A673 (cell line): ENCODE measurements at regions of chr1 and their contacts with region 1.

Region 1: DNA sequence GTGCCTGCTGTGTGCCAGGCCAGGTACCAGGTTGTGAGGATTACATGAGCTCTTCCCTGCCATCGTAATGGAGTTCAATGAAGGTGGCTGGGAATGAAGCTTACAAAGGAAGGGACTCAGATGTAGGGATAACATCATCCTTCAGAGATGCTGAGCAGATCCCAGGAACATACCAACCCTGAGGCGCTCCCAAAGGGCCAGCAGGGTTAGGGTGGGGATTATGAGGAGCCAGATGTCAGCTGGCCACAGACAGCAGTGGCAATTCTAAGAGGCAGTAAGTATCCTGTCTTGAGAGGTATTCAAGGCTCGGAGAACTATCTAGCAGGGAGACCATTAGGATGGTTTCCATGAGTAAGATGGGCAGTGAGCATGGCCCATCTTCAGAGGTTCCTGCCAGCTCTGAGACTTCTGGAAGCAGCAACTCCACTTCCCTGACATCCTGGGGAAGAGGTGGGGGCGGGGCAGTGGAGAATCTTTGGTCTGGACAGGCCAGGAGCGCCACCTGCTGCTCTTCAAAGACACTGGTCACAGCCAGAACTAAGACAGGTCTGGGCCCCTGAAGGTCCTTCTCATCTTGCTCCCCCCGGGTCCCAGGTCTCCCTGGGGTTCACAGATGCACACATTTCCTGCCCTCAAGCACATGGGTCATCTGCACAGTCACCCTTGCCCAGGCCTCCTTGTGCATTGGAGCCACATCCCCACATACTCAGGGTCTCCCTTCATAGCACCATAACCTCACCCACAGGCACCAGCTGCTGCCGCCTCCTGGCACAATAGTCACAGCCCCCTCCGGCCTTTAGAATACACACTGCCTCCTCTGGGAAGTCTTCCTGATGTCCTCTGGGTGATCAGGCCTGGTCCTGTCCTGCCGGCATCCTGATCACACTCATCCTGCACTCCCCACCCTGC is 2.7 kb upstream of the SDC3 start:
- DNase-seq: peak; percentile 86
- H3K4me3 ChIP-seq: no peak overlapping the region
- H3K27ac ChIP-seq: no peak overlapping the region
- H3K4me1 ChIP-seq: peaks cover 8% of the 10 kb centered on the region
- H3K27me3 ChIP-seq: peaks cover 12% of the 10 kb centered on the region
- CTCF ChIP-seq: peak; percentile 81

Region 2: DNA sequence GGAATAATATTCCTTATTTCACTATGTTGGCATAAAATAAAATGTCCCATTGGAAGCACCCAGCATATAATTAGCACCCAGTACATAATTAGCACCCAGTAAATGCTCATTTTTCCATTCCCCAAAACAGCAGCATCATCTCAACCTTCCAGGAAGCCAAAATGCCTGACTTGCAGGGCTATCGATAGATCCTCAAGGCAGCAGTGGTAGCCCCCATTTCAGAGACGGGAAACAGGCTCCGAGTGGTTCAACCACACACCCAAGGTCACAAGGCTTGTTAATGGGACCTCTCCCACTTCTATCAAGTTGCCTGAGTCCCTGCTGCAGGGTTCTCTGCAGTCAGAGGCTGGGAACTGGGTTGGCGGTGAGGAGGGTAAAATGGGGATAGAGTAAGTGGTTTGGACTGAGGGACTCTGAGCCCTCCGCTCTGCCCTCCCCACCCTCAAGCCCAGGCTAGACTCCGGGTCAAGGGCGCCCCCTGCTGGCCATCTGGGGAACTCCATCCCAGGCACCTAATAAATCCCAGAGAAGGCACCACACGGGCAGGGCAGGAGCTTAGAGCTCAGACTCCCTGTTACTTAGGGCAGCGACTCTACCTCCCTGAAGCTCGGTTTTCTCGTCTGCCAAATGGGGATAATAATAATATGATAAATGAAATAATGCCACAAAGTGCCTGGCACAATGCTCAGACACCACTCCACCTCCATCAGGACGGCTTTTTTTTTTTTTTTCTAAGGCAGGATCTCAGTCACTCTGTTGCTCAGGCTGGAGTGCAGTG is 131.8 kb before region 1 on chr1:
- CTCF ChIA-PET with region 1: interaction called, 27 read pairs
- POLR2A ChIA-PET with region 1: no interaction called
- intact Hi-C with region 1: loop called (anchors 5 kb)
- DNase-seq: peak; percentile 86
- H3K4me3 ChIP-seq: no peak overlapping the region
- H3K27ac ChIP-seq: no peak overlapping the region
- H3K4me1 ChIP-seq: peaks cover 24% of the 10 kb centered on the region
- H3K27me3 ChIP-seq: no peaks in the 10 kb centered on the region
- CTCF ChIP-seq: peak; percentile 95

Region 3: DNA sequence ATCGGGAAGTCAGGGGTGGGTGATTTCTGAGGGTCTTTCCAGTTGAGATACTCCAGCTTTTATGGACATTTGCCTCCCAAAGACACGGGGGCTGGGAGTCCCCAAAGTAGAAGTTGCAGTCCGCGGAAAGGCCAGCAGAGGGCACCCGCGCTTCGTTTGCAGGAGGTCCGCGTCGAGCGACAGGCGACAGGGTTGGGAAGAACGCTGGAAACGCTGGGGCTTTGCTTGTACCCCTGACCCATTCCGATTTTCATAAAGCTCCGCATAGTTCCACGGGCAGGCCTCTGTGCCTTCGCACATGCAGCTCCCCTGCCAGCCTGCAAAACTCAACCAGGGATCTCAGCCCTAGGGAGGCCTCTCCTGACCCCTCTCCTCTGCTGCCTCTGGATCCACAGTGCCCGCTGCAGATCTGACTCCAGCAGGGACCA is 109.5 kb before region 1 on chr1:
- CTCF ChIA-PET with region 1: interaction called, 64 read pairs
- POLR2A ChIA-PET with region 1: no interaction called
- intact Hi-C with region 1: loop called (anchors 1 kb)
- DNase-seq: peak; percentile 84
- H3K4me3 ChIP-seq: no peak overlapping the region
- H3K27ac ChIP-seq: no peak overlapping the region
- H3K4me1 ChIP-seq: peaks cover 4% of the 10 kb centered on the region
- H3K27me3 ChIP-seq: peaks cover 7% of the 10 kb centered on the region
- CTCF ChIP-seq: peak; percentile 96

Region 4: DNA sequence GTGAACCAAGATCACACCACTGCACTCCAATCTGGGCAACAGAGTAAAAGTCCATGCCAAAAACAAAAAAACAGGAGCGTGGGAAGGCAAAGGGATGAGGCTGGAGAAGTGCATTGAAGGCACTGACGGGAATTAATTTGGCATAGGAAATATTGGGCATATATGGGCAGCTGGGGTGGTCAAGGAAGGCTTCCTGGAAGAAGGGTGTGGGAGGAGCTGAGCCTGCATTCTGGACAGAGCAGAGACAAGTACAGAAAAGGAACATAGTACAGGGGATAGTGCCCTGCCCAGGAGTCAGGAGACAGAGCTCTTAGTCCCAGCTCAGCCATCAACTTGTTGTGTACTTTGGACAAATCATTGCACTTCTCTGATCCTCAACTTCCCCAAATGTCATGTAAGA is 14.4 kb before region 1 on chr1:
- CTCF ChIA-PET with region 1: interaction called, 10 read pairs
- POLR2A ChIA-PET with region 1: no interaction called
- intact Hi-C with region 1: no loop called
- DNase-seq: no peak
- H3K4me3 ChIP-seq: no peak overlapping the region
- H3K27ac ChIP-seq: no peak overlapping the region
- H3K4me1 ChIP-seq: peaks cover 3% of the 10 kb centered on the region
- H3K27me3 ChIP-seq: no peaks in the 10 kb centered on the region
- CTCF ChIP-seq: no peak

Region 5: DNA sequence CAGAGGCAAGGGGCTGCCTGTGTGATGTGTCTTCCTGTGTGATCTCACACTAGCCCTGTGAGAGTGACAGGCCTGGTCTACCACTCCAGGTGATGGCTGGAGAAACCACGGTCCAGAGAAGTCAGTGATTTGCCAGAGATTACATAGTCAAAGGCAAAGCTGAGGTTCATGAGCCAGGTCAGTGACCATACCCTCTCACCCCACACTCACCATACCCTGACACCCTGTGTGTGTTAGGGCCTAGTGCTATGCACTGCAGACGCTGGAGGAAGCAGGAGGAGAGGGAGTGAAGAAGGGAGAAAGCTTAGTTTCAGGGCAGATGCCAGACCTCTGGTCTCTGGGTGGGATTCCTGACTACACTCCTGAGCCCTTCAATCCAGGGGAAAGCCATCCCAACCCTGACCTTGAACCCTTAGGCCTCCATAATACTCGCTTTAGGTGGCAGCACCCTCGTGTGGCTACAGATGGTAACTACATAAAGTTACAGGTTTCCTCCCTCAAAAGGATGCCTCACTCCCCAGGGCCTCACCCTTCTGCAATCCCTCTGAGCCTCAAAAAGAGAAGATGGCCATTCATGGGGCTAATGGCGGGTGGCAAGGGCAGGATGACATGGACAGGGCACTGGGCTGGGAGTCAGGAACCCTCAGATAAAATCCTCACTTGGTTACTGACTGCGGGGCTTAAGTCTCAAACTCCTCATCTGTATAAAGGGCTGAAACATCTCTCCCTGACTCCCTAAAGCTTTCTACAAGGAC is 18.0 kb after region 1 on chr1:
- CTCF ChIA-PET with region 1: no interaction called
- POLR2A ChIA-PET with region 1: no interaction called
- intact Hi-C with region 1: no loop called
- DNase-seq: peak; percentile 61
- H3K4me3 ChIP-seq: no peak overlapping the region
- H3K27ac ChIP-seq: no peak overlapping the region
- H3K4me1 ChIP-seq: no peaks in the 10 kb centered on the region
- H3K27me3 ChIP-seq: no peaks in the 10 kb centered on the region
- CTCF ChIP-seq: peak; percentile 75

Region 6: GRCh38 chr1:31243501-31244286 is 332.4 kb after region 1 on chr1:
- CTCF ChIA-PET with region 1: no interaction called
- POLR2A ChIA-PET with region 1: no interaction called
- intact Hi-C with region 1: no loop called
- DNase-seq: no peak
- H3K4me3 ChIP-seq: no peak overlapping the region
- H3K27ac ChIP-seq: no peak overlapping the region
- H3K4me1 ChIP-seq: no peaks in the 10 kb centered on the region
- H3K27me3 ChIP-seq: peaks cover 25% of the 10 kb centered on the region
- CTCF ChIP-seq: no peak

Region 7: GRCh38 chr1:31715087-31715872 is 804.0 kb after region 1 on chr1:
- CTCF ChIA-PET with region 1: no interaction called
- POLR2A ChIA-PET with region 1: no interaction called
- intact Hi-C with region 1: no loop called
- DNase-seq: peak; percentile 77
- H3K4me3 ChIP-seq: no peak overlapping the region
- H3K27ac ChIP-seq: no peak overlapping the region
- H3K4me1 ChIP-seq: peaks cover 4% of the 10 kb centered on the region
- H3K27me3 ChIP-seq: no peaks in the 10 kb centered on the region
- CTCF ChIP-seq: peak; percentile 89